ENCODE measurements at regions of chr1 and their contacts with region 1.

Region 1: GRCh38 chr1:36285448-36286101 is 20.6 kb upstream of the SH3D21 start:
- DNase-seq: peak; percentile 73 to 74
- ATAC-seq: peak; percentile 71 to 83
- H3K4me3 ChIP-seq: peak overlapping the region in 2 of 4 donors; percentile 12 to 31
- H3K27ac ChIP-seq: peak overlapping the region; percentile 89 to 92 (median 90)
- H3K4me1 ChIP-seq: peaks cover 92 to 97% of the 10 kb centered on the region in 2 donors
- H3K27me3 ChIP-seq: no peaks in the 10 kb centered on the region
- CTCF ChIP-seq: peak; percentile 69 to 85 (median 80)
- POLR2A ChIP-seq: no peak

Region 2: DNA sequence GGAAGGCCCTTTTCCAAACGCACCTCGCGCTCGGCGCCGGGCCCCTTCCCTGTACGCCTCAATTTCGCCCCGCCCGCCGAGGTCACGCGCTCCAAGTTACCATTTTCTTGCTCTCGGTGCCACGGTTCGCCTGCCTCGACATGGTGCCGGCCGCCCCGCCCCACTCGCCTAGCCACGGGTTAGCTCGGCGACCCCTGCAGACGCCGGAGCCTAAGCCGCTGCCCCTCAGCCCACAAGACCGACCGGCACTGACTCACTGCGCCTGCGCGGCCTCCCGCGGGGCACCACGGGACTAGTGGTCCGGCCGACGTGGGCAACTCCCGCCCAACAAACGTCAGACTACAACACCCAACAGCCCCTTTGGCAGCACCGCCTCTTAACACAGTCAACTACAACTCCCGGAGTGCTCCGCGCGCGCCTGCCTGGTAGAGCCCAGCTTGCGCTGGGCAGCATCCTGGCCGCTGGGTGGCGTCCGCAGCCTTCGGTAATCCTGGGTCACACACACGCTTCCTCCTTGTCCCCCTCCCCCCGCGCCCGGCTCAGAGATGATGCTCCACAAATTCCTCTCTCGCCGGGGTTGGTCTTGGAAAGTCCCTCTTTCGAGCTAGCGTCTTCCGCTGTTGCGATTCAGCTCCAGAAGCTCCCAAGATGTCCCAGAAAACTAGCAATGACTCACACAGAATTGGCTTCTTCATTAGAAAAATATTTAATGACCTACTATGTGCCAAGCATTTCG is 136.2 kb before region 1 on chr1 and contains the start of gene TRAPPC3:
- in situ Hi-C with region 1: loop called in 3 of 4 experiments (anchors 5 to 10 kb)
- intact Hi-C with region 1: loop called (anchors 1 kb)
- DNase-seq: peak; percentile 100
- ATAC-seq: peak; percentile 78 to 87
- H3K4me3 ChIP-seq: peak within 1 kb of the TSS; percentile 70 to 89 (median 80)
- H3K27ac ChIP-seq: peak within 1 kb of the TSS; percentile 90 to 100 (median 98)
- H3K4me1 ChIP-seq: peaks cover 37 to 54% of the 10 kb centered on the region in 2 donors
- H3K27me3 ChIP-seq: no peaks in the 10 kb centered on the region
- CTCF ChIP-seq: peak; percentile 96 to 98 (median 97)
- POLR2A ChIP-seq: peak; percentile 97 to 98
- total RNA-seq, gene TRAPPC3: 57.5 to 72.4 (median 63.5) TPM

Region 3: DNA sequence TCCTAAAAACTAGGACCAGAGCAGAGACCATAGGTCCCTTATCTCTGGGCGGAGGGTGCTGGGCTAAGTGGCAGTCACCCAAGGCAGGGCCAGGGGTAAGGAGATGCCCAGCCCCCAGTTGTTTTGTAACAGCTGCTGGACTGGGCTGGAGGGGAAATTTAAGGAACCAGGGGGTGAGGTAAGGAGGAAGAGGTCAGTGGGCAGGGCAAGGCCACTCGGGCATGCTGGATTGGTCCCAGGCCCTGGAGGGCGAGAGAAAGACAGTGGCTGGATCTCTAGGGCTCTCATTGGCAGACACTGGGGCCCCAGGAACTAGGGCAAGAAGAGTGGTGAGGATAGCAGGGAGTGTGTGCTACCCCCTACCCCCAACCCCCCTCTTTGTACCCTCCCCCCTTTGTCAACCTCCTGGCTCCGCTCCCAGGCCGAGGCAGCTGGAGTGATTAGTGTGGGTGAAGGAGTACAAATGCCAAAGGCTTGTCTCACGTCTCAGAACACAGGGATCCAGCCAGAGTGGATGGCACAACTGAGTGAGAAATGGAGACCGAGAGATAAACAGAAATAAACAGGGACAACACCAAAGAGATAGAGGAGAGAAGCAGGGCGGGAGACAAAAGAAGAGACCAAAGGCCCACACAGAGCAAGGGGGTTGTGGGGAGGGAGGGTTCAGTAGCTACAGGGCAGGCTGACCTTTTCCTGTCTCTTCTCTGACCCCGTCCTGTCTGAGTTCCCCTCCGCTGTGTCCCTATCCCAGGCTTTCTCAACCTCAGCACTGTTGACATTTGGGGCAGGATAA is 81.8 kb before region 1 on chr1:
- in situ Hi-C with region 1: loop called in 2 of 4 experiments (anchors 10 to 25 kb)
- intact Hi-C with region 1: loop called (anchors 2 kb)
- DNase-seq: peak; percentile 88 to 97
- ATAC-seq: peak; percentile 69 to 77
- H3K4me3 ChIP-seq: peak overlapping the region in 3 of 4 donors; percentile 8 to 24 (median 16)
- H3K27ac ChIP-seq: peak overlapping the region; percentile 89 to 97 (median 94)
- H3K4me1 ChIP-seq: peaks cover 71 to 79% of the 10 kb centered on the region in 2 donors
- H3K27me3 ChIP-seq: no peaks in the 10 kb centered on the region
- CTCF ChIP-seq: no peak
- POLR2A ChIP-seq: peak in 1 of 2 donors; percentile 48

Region 4: DNA sequence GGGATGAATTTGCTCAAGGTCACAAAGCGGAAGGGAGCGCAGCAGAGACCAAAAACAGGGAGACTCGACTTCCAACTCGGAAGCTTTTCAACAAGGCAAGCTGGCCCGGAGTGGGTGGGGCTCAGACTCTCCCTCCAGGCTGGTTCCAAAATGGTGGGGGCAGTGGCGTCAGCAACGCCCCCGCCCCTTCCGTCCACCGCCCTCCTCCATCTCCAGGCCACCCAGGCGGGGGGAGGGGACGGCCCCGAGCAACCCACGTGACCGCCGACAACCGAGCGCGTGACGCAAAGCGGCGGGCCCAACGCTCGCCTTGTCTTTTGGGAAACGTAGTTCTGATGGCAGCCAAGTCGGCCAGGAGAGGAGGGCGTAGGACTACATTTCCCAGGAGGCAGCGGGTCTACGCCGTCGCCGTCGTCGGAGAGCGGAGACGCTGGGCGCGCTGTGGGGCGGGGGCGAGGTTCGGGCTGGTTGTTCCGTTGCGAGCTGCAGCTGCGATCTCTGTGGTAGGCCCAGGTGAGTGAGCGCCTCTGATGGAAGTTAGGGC is 61.5 kb before region 1 on chr1 and contains the start of gene THRAP3:
- in situ Hi-C with region 1: loop called in 1 of 4 experiments (anchors 5 kb)
- intact Hi-C with region 1: loop called (anchors 2 kb)
- DNase-seq: peak; percentile 99 to 100
- ATAC-seq: peak; percentile 85 to 86
- H3K4me3 ChIP-seq: peak within 1 kb of the TSS; percentile 69 to 97 (median 90)
- H3K27ac ChIP-seq: peak within 1 kb of the TSS; percentile 94 to 99 (median 98)
- H3K4me1 ChIP-seq: peaks cover 38 to 51% of the 10 kb centered on the region in 2 donors
- H3K27me3 ChIP-seq: no peaks in the 10 kb centered on the region
- CTCF ChIP-seq: no peak
- POLR2A ChIP-seq: peak; percentile 99 to 100
- total RNA-seq, gene THRAP3: 88.2 to 174 (median 146) TPM

Region 5: GRCh38 chr1:36342481-36343478 is 57.2 kb after region 1 on chr1:
- in situ Hi-C with region 1: no loop called
- intact Hi-C with region 1: no loop called
- DNase-seq: no peak
- ATAC-seq: peak in 1 of 2 donors; percentile 8
- H3K4me3 ChIP-seq: no peak overlapping the region
- H3K27ac ChIP-seq: peak overlapping the region; percentile 75 to 82 (median 78)
- H3K4me1 ChIP-seq: peaks cover 23 to 27% of the 10 kb centered on the region in 2 donors
- H3K27me3 ChIP-seq: no peaks in the 10 kb centered on the region
- CTCF ChIP-seq: peak; percentile 32 to 77 (median 72)
- POLR2A ChIP-seq: no peak

Measured in gastrocnemius medialis (tissue), 4 donors.